A549 (cell line): ENCODE measurements at regions of chr2 and their contacts with region 1.

Region 1: DNA sequence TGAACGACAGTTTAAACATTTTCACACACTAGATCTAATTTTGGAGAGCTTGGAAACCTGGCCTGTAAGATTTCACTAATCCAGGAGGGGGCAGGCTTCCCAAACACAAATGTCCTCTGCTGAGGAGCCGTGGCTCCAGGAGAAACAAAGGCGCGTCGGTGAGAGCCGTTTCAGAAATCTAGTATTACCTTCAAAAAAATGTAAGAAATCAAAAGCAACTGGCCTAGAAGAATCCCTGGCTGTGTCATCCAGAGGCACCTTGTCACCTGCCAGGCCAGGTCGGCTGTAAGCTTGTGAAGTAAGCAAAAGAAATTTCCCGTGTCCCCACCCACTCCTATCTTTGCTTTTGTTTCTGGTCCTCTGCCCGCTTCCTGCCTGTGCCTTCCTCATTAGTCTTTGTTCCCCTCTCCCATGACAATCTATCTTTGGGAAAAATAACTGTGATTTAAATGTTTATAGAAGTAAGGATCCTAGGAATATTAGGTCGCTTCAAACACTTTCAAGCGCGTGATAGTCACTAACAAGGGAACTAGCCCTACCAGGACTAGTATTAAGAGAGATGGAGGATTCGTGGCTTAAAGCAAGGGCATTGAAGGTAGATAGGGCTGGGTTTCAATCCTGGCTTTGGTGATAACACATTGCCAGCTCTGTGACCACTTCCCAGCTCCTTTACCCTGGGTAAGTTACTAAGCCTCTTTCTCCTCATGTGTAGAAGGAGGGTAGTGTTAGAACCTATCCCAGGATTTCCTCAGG is 99.5 kb upstream of the STK39 start:
- DNase-seq: peak; percentile 53 to 66
- ATAC-seq: peak; percentile 86 to 91
- H3K4me3 ChIP-seq: peak overlapping the region; percentile 42
- H3K27ac ChIP-seq: peak overlapping the region; percentile 50 to 76
- H3K4me1 ChIP-seq: no peaks in the 10 kb centered on the region
- CTCF ChIP-seq: peak; percentile 88
- EP300 ChIP-seq: no peak
- POLR2A ChIP-seq: no peak
- RAD21 ChIP-seq: peak; percentile 86 to 94

Region 2: DNA sequence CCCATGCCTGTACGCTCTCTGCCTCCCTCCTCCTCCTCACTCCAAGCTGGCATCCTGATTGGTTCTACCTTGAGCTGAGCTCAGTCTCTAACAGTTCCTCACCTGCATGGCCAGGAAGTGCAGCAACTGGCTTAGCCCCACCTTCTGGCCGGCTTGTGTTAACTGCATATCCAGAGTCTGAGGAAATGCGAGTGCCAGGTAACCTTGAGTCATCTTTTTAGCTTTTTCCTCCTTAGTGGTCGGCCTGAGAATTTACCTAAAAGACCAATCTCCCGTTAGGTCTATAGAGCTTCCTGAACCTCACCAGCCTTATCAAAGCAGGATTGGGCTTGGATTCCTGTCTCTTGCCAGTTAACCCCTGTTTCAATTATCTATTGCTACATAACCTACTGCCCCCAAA is 10.0 kb before region 1 on chr2:
- CTCF ChIA-PET with region 1: interaction called, 15 read pairs
- POLR2A ChIA-PET with region 1: no interaction called
- DNase-seq: peak in 1 of 2 experiments; percentile 55
- ATAC-seq: peak; percentile 84 to 90
- H3K4me3 ChIP-seq: no peak overlapping the region
- H3K27ac ChIP-seq: no peak overlapping the region
- H3K4me1 ChIP-seq: no peaks in the 10 kb centered on the region
- CTCF ChIP-seq: peak; percentile 27; the same call in 2 of the 3 replicates
- EP300 ChIP-seq: no peak
- POLR2A ChIP-seq: no peak
- RAD21 ChIP-seq: peak; percentile 26 to 36; a peak in 2 of 5 replicates

Region 3: GRCh38 chr2:168371273-168372019 is 24.5 kb after region 1 on chr2:
- CTCF ChIA-PET with region 1: no interaction called
- POLR2A ChIA-PET with region 1: no interaction called
- DNase-seq: no peak
- ATAC-seq: no peak
- H3K4me3 ChIP-seq: no peak overlapping the region
- H3K27ac ChIP-seq: no peak overlapping the region
- H3K4me1 ChIP-seq: no peaks in the 10 kb centered on the region
- CTCF ChIP-seq: no peak
- EP300 ChIP-seq: no peak
- POLR2A ChIP-seq: no peak
- RAD21 ChIP-seq: no peak

Region 4: DNA sequence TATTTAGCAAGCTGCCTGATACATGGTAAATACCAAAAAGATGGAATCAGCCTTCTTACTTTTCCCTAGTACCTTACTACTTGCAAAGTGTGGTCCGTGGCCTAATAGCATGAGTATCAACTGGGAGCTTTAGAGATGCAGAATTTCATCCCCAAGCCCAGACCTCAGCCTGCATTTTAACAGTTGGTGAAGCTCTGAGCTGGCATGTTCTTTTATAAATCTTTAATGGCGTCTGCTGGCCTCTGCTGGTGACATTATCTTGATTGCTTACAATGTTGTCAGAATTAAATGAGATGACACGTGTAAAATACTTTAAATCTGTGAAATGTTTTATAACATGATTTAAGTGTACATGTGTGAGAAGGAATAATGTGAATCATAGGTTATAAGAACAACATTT is 340.4 kb after region 1 on chr2:
- CTCF ChIA-PET with region 1: interaction called, 29 read pairs
- POLR2A ChIA-PET with region 1: no interaction called
- DNase-seq: peak in 1 of 2 experiments; percentile 18
- ATAC-seq: no peak; a peak in 1 of 6 replicates
- H3K4me3 ChIP-seq: no peak overlapping the region
- H3K27ac ChIP-seq: no peak overlapping the region
- H3K4me1 ChIP-seq: no peaks in the 10 kb centered on the region
- CTCF ChIP-seq: peak; percentile 41
- EP300 ChIP-seq: no peak
- POLR2A ChIP-seq: no peak
- RAD21 ChIP-seq: peak; percentile 44 to 59

Region 5: DNA sequence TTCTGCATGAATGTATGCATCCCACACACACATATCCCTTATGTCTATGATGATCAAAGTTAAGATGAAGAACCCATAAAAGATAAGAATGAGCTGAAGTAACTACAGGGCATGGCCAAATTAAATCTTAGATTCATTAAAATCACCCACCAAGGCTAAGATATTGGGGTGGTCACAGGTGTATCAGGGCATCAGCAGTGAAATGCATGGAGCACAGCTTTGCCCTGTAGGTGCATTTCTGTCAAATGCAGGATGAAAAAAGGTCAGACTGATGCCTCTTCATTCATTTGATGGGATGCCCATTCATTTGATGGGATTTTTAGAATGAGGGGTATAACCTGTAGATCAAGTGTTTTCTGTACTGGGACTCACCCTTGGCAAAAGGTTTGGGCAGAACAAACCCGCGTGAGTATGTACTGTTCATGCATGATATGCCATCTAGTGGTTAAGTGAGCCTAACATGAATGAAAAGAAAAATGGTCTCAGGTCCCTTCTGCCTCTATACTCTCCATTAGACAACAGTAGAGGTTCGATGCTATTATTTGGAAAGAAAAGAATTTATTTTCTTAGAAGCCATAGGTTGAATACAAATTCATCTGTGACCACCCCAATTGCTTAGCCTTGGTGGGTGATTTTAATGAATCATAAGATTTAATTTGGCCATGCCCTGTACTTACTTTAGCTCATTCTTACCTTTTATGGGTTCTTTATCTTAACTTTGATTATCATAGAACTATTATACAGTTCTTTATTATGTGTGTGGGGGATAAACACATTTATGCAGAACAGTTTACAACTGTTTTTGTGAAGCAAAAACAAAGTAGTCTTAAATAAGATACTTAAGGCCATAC is 412.3 kb after region 1 on chr2:
- CTCF ChIA-PET with region 1: interaction called, 47 read pairs
- POLR2A ChIA-PET with region 1: no interaction called
- DNase-seq: peak; percentile 37 to 67
- ATAC-seq: peak; percentile 94 to 98
- H3K4me3 ChIP-seq: no peak overlapping the region
- H3K27ac ChIP-seq: no peak overlapping the region
- H3K4me1 ChIP-seq: no peaks in the 10 kb centered on the region
- CTCF ChIP-seq: peak; percentile 82
- EP300 ChIP-seq: no peak
- POLR2A ChIP-seq: no peak
- RAD21 ChIP-seq: peak; percentile 75 to 79